ENCODE measurements at regions of chr7 and their contacts with region 1.

Region 1: GRCh38 chr7:97845622-97846203 is 26.5 kb downstream of the ASNS start:
- DNase-seq: peak; percentile 58
- ATAC-seq: peak; percentile 44; the same call in 1 of the 2 replicates
- H3K4me3 ChIP-seq: no peak overlapping the region
- H3K27ac ChIP-seq: no peak overlapping the region
- H3K4me1 ChIP-seq: no peaks in the 10 kb centered on the region
- H3K27me3 ChIP-seq: no peaks in the 10 kb centered on the region
- CTCF ChIP-seq: peak; percentile 64

Region 2: GRCh38 chr7:97104719-97105238 is 740.9 kb before region 1 on chr7:
- CTCF ChIA-PET with region 1: no interaction called
- POLR2A ChIA-PET with region 1: no interaction called
- intact Hi-C with region 1: loop called (anchors 2 kb)
- DNase-seq: peak; percentile 75
- ATAC-seq: peak; percentile 95
- H3K4me3 ChIP-seq: no peak overlapping the region
- H3K27ac ChIP-seq: no peak overlapping the region
- H3K4me1 ChIP-seq: no peaks in the 10 kb centered on the region
- H3K27me3 ChIP-seq: no peaks in the 10 kb centered on the region
- CTCF ChIP-seq: peak; percentile 89

Region 3: DNA sequence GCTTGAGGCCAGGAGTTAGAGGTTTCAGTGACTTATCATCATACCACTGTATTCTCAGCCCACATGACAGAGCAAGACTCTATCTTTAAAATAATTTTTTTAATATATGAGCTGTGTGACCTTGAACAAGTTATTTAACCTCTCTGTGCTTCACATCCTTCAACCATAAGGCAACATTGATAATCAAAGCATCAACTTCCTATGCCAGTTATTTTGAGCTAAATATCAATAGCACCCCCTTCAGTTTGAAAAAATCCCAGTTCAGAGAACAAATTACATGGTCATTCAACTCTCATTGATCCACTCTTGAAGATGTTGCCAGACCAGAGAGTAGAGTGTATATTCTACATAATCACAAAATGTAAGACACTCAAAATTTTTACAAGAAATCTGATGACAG is 26.6 kb before region 1 on chr7:
- CTCF ChIA-PET with region 1: no interaction called
- POLR2A ChIA-PET with region 1: no interaction called
- intact Hi-C with region 1: no loop called
- DNase-seq: peak; percentile 31
- ATAC-seq: no peak
- H3K4me3 ChIP-seq: no peak overlapping the region
- H3K27ac ChIP-seq: no peak overlapping the region
- H3K4me1 ChIP-seq: no peaks in the 10 kb centered on the region
- H3K27me3 ChIP-seq: peaks cover 10% of the 10 kb centered on the region; the same call in 1 of the 2 replicates
- CTCF ChIP-seq: peak; percentile 43; the same call in 1 of the 2 replicates

Measured in PC-3 (cell line).